ENCODE measurements at regions of chr20 and their contacts with region 1.

Region 1: GRCh38 chr20:40990542-40991120 is 38.0 kb upstream of the TOP1 start:
- H3K4me3 ChIP-seq: no peak overlapping the region
- H3K27ac ChIP-seq: no peak overlapping the region
- H3K4me1 ChIP-seq: no peaks in the 10 kb centered on the region
- CTCF ChIP-seq: peak; percentile 79

Region 2: GRCh38 chr20:40868551-40869217 is 121.9 kb before region 1 on chr20:
- CTCF ChIA-PET with region 1: no interaction called
- POLR2A ChIA-PET with region 1: no interaction called
- H3K4me3 ChIP-seq: no peak overlapping the region
- H3K27ac ChIP-seq: no peak overlapping the region
- H3K4me1 ChIP-seq: no peaks in the 10 kb centered on the region
- CTCF ChIP-seq: no peak

Region 3: DNA sequence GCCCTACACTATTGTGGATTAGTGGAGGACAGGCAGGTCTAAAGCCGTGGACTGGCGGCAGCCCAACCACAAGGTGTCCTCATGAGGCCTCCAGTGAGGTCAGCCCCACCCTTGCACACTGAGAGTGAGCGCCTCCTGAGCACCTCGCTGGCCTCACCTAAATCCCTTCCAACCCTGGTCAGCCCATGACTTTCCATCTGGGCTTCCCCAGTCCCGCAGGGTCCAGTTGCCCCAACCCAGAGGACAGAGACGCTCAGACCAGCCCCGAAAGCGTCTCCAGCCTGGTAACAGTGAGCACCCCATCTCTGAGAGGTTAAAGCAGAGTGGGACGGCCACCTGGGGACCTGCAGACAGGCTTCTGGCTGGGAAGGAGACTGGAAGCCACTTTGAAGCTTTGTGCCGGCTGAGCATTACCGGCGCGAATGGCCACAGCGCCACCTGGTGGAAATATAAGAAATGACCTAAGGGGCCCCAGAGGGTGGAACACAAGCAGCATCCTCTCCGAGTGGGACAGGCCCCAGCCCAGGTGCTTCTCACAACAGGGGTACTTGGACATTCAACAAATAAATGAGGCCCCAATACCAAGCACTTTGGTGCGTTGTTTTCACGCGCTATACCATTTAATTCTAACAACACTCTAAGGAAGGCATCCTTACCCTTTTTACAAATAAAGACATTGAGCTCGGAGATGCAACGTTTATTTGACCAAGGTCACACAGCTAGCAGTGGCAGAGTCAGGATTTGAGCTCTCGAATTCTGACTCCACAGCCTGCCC is 27.7 kb before region 1 on chr20:
- CTCF ChIA-PET with region 1: interaction called, 12 read pairs
- POLR2A ChIA-PET with region 1: no interaction called
- H3K4me3 ChIP-seq: no peak overlapping the region
- H3K27ac ChIP-seq: no peak overlapping the region
- H3K4me1 ChIP-seq: no peaks in the 10 kb centered on the region
- CTCF ChIP-seq: peak; percentile 82

Region 4: GRCh38 chr20:41029149-41029923 is 38.7 kb after region 1 on chr20:
- CTCF ChIA-PET with region 1: interaction called, 19 read pairs
- POLR2A ChIA-PET with region 1: interaction called, 6 read pairs
- H3K4me3 ChIP-seq: peak overlapping the region; percentile 62
- H3K27ac ChIP-seq: peak overlapping the region; percentile 88
- H3K4me1 ChIP-seq: peaks cover 13% of the 10 kb centered on the region
- CTCF ChIP-seq: no peak

Region 5: GRCh38 chr20:41078329-41078728 is 87.7 kb after region 1 on chr20:
- CTCF ChIA-PET with region 1: interaction called, 79 read pairs
- POLR2A ChIA-PET with region 1: no interaction called
- H3K4me3 ChIP-seq: no peak overlapping the region
- H3K27ac ChIP-seq: no peak overlapping the region
- H3K4me1 ChIP-seq: peaks cover 14% of the 10 kb centered on the region
- CTCF ChIP-seq: 0 out of 2 replicates have a peak, but pooled peaks have one; percentile 20

Region 6: GRCh38 chr20:41095110-41095969 is 104.7 kb after region 1 on chr20:
- CTCF ChIA-PET with region 1: interaction called, 138 read pairs
- POLR2A ChIA-PET with region 1: interaction called, 3 read pairs
- H3K4me3 ChIP-seq: no peak overlapping the region
- H3K27ac ChIP-seq: no peak overlapping the region
- H3K4me1 ChIP-seq: no peaks in the 10 kb centered on the region
- CTCF ChIP-seq: peak; percentile 50

Region 7: GRCh38 chr20:41110930-41111577 is 120.4 kb after region 1 on chr20:
- CTCF ChIA-PET with region 1: no interaction called
- POLR2A ChIA-PET with region 1: no interaction called
- H3K4me3 ChIP-seq: no peak overlapping the region
- H3K27ac ChIP-seq: no peak overlapping the region
- H3K4me1 ChIP-seq: no peaks in the 10 kb centered on the region
- CTCF ChIP-seq: no peak

Region 8: DNA sequence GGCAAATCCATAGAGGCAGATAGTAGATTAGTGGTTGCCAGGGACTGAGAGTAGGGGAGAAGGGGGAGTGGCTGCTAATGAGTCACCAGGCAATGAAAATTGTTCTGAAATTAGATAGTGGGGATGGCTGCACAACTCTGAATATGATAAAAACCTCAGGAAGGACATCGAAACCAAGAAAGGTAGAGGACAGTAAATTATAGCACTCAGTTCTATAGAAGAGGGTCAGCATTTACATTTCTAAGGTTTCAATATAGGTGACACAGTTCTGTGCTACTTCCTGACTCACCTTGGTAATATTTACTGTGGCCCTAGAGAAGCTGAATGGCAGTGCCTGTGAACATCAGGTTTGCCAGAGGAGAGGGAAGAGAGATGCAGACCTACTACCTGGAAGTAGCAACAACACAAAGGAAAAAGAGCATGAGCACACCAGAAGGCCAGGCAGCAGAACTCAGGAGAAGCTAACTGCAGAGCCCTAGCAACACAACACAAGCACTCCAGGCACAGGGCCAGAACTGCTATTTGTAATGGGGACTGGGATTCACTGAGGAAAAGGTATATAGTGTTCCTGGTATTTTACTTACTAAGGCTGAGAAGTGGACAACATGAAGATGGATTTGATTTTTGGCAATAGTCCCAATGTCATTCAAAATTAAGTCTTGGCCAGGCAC is 222.7 kb after region 1 on chr20:
- CTCF ChIA-PET with region 1: no interaction called
- POLR2A ChIA-PET with region 1: no interaction called
- H3K4me3 ChIP-seq: no peak overlapping the region
- H3K27ac ChIP-seq: no peak overlapping the region
- H3K4me1 ChIP-seq: 0 out of 2 replicates have a peak, but pooled peaks cover 5% of the 10 kb centered on the region
- CTCF ChIP-seq: no peak

Region 9: GRCh38 chr20:41411391-41411847 is 420.8 kb after region 1 on chr20:
- CTCF ChIA-PET with region 1: no interaction called
- POLR2A ChIA-PET with region 1: no interaction called
- H3K4me3 ChIP-seq: no peak overlapping the region
- H3K27ac ChIP-seq: no peak overlapping the region
- H3K4me1 ChIP-seq: no peaks in the 10 kb centered on the region
- CTCF ChIP-seq: no peak